B cell (primary cell): ENCODE measurements at regions of chr6 and their contacts with region 1.

Region 1: DNA sequence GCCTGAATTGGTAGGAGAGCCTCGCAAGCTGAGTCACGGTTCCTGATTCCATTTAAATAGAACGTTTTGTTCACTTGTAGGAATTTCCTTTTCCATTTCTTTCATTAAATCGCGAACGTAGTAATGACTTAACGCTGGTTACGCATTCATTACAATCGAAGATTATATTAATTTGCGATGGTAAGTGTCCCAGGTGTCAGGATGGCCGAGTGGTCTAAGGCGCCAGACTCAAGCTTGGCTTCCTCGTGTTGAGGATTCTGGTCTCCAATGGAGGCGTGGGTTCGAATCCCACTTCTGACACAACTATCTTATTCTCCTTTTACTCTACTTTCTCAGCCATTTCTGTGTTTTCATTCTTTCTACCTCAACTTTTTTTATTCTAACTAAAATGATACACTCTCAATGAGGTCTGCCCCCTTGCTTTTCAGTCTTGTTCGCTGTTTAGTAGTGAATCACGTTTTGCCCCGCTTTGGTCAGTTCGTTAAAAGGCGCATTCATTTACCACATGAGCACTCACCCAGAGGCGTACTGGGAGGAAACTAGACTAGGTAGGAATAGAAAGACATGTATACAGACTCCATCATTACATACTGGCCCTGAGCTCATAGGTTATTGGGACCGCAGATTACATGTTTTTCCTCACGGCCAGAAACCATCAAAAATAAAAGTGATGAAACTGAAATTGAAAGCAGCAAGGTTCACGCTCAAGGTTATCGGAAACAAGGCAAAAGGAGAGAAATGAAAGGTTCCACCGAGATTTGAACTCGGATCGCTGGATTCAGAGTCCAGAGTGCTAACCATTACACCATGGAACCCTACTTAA is 17.3 kb upstream of the TRIM27 start:
- DNase-seq: peak; percentile 90
- ATAC-seq: peak; percentile 70
- H3K4me3 ChIP-seq: peak overlapping the region; percentile 55 to 99 (median 83)
- H3K4me3 Mint-ChIP-seq: peak overlapping the region; percentile 95
- H3K27ac ChIP-seq: peak overlapping the region; percentile 46 to 69
- H3K27ac Mint-ChIP-seq: peak overlapping the region; percentile 92
- H3K4me1 ChIP-seq: peaks cover 29 to 39% of the 10 kb centered on the region in 2 donors
- H3K4me1 Mint-ChIP-seq: peaks cover 44% of the 10 kb centered on the region
- H3K27me3 ChIP-seq: peaks cover 0 to 4% (median 0%) of the 10 kb centered on the region in 4 experiments
- H3K27me3 Mint-ChIP-seq: no peaks in the 10 kb centered on the region
- CTCF ChIP-seq: no peak

Region 2: DNA sequence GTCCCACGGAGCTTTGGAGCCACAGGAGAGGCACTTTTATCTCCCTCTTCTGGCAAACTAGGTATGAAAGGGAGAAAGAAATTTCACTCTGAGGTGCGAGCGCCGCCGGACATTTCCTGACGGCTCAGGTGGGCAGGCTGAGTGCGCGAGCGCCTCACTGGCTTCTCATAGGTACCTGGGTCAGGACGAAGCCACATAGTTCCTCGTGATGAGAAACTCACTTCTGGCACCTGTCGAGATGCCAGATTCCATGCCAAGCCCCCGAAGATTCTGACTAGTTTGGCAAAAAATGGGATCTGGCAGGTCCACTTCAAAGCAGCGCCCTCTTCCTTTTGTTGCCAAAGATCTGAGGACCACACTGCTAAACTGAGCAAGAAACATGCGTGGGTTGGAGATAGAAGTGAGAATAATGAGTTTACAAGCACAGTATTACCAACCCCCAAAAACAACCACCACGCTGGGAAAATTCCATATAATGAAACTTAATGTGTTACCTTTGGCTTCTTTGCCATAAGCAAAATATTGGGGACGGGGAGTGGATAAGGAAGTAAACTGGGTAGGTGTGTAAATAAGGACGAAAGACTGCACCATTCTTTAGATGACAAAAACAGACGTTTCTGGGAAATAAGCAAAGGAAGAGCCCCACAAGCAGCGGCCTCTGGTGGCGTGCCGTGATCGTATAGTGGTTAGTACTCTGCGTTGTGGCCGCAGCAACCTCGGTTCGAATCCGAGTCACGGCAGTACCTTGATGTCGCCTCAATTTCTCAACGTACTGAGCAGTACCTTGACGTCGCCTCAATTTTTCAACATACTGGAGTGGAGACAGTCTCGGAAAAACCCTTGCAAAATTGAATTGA is 1783.4 kb before region 1 on chr6:
- CTCF ChIA-PET with region 1: no interaction called
- POLR2A ChIA-PET with region 1: no interaction called
- intact Hi-C with region 1: loop called (anchors 5 kb)
- DNase-seq: peak; percentile 91
- ATAC-seq: peak; percentile 77
- H3K4me3 ChIP-seq: peak overlapping the region; percentile 59 to 91 (median 72)
- H3K4me3 Mint-ChIP-seq: peak overlapping the region; percentile 94
- H3K27ac ChIP-seq: peak overlapping the region; percentile 18 to 45
- H3K27ac Mint-ChIP-seq: peak overlapping the region; percentile 85
- H3K4me1 ChIP-seq: peaks cover 17 to 20% of the 10 kb centered on the region in 2 donors
- H3K4me1 Mint-ChIP-seq: peaks cover 25% of the 10 kb centered on the region
- H3K27me3 ChIP-seq: no peaks in the 10 kb centered on the region
- H3K27me3 Mint-ChIP-seq: no peaks in the 10 kb centered on the region
- CTCF ChIP-seq: peak; percentile 64

Region 3: DNA sequence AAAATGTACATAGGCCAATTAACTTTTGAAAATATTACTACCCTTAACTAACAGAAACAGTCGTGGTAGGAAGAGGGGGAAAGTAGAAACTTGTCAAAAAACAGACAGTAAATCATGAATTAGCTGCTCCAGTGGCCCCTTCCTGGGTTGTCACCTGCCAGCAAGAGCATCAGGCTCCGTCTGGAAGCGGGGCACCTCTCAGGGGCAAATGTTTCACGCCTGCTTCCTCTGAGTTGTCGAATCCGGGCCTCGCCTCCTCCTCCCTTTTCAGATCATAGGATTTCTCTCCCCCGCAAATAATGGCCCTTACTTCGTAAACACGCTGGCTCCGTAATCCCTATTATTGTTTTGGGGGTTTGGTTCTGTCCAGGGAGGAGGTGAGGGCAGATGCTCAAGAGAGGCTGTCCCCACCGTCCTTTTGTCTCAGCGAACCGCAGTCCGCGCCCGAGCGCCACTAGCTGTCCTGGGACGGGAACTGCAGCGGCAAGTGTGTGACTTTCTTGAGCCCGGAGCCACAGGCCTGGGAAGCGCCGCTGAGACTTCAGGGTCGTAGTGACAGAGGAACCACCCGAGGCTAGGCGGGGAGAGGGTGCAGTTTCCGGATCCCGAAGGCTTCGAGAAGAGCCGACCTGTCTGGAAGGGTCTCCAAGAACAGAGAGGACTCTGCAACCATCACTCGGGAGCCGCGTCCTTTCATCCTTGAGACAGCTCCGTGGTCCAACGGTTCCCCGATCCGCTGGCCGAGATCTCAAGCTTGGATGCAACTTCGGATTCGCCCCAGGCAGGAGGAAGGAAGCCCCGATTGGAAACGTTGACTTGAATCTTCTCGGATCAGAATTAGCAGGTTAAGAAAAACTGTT is 1253.7 kb before region 1 on chr6:
- CTCF ChIA-PET with region 1: no interaction called
- POLR2A ChIA-PET with region 1: no interaction called
- intact Hi-C with region 1: loop called (anchors 5 kb)
- DNase-seq: peak; percentile 87
- ATAC-seq: peak; percentile 73
- H3K4me3 ChIP-seq: peak overlapping the region; percentile 27 to 99 (median 77)
- H3K4me3 Mint-ChIP-seq: peak overlapping the region; percentile 93
- H3K27ac ChIP-seq: peak overlapping the region in 1 of 2 donors; percentile 32
- H3K27ac Mint-ChIP-seq: peak overlapping the region; percentile 91
- H3K4me1 ChIP-seq: peaks cover 7 to 15% of the 10 kb centered on the region in 2 donors
- H3K4me1 Mint-ChIP-seq: peaks cover 16% of the 10 kb centered on the region
- H3K27me3 ChIP-seq: peaks cover 0 to 8% (median 2%) of the 10 kb centered on the region in 4 experiments
- H3K27me3 Mint-ChIP-seq: peaks cover 4% of the 10 kb centered on the region
- CTCF ChIP-seq: peak; percentile 69

Region 4: GRCh38 chr6:28895134-28895812 is 45.8 kb before region 1 on chr6:
- CTCF ChIA-PET with region 1: no interaction called
- POLR2A ChIA-PET with region 1: interaction called, 3 read pairs
- intact Hi-C with region 1: loop called (anchors 1 kb)
- DNase-seq: peak; percentile 96
- ATAC-seq: peak; percentile 58
- H3K4me3 ChIP-seq: peak overlapping the region; percentile 73 to 86 (median 83)
- H3K4me3 Mint-ChIP-seq: peak overlapping the region; percentile 99
- H3K27ac ChIP-seq: peak overlapping the region; percentile 97
- H3K27ac Mint-ChIP-seq: peak overlapping the region; percentile 100
- H3K4me1 ChIP-seq: peaks cover 7 to 12% of the 10 kb centered on the region in 2 donors
- H3K4me1 Mint-ChIP-seq: peaks cover 21% of the 10 kb centered on the region
- H3K27me3 ChIP-seq: no peaks in the 10 kb centered on the region
- H3K27me3 Mint-ChIP-seq: peaks cover 4% of the 10 kb centered on the region
- CTCF ChIP-seq: no peak

Region 5: GRCh38 chr6:28953039-28953584 is 12.0 kb after region 1 on chr6:
- CTCF ChIA-PET with region 1: no interaction called
- POLR2A ChIA-PET with region 1: no interaction called
- intact Hi-C with region 1: no loop called
- DNase-seq: peak; percentile 68
- ATAC-seq: peak; percentile 45
- H3K4me3 ChIP-seq: peak overlapping the region in 4 of 5 experiments; percentile 1 to 54 (median 39)
- H3K4me3 Mint-ChIP-seq: peak overlapping the region; percentile 77
- H3K27ac ChIP-seq: no peak overlapping the region
- H3K27ac Mint-ChIP-seq: peak overlapping the region; percentile 20
- H3K4me1 ChIP-seq: peaks cover 10 to 11% of the 10 kb centered on the region in 2 donors
- H3K4me1 Mint-ChIP-seq: peaks cover 15% of the 10 kb centered on the region
- H3K27me3 ChIP-seq: peaks cover 0 to 27% (median 7%) of the 10 kb centered on the region in 4 experiments
- H3K27me3 Mint-ChIP-seq: peaks cover 23% of the 10 kb centered on the region
- CTCF ChIP-seq: no peak

Region 6: DNA sequence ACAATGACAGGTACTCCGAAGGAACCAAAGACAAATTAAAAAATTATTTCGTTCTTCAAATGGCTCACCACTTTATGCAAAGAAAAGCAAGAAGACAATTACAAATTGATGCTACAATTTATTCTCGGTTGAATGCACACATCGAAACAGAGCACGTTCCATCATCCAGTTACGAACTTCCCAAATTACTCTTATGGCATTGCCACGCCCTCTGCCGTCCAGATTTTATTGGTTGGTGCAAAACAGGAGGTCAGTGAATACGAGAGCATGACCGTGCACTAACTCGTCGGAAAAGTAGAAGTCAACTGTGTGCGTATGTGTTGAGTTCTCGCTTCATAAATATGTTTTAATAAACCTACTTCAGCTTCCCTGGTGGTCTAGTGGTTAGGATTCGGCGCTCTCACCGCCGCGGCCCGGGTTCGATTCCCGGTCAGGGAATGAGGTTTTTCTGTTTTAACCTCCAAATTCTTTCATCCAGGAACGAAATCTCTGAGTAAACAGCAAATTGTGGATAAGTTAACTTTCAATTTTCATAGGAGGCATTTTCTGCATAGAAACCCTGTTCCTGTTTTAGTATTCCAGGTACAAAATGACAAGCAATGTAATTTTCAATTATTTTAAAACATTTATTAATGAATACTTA is 40.9 kb after region 1 on chr6:
- CTCF ChIA-PET with region 1: interaction called, 4 read pairs
- POLR2A ChIA-PET with region 1: interaction called, 3 read pairs
- intact Hi-C with region 1: loop called (anchors 1 kb)
- DNase-seq: peak; percentile 91
- ATAC-seq: peak; percentile 70
- H3K4me3 ChIP-seq: peak overlapping the region; percentile 67 to 97 (median 75)
- H3K4me3 Mint-ChIP-seq: peak overlapping the region; percentile 93
- H3K27ac ChIP-seq: no peak overlapping the region
- H3K27ac Mint-ChIP-seq: peak overlapping the region; percentile 96
- H3K4me1 ChIP-seq: peaks cover 36 to 37% of the 10 kb centered on the region in 2 donors
- H3K4me1 Mint-ChIP-seq: peaks cover 55% of the 10 kb centered on the region
- H3K27me3 ChIP-seq: peaks cover 0 to 28% (median 14%) of the 10 kb centered on the region in 4 experiments
- H3K27me3 Mint-ChIP-seq: peaks cover 28% of the 10 kb centered on the region
- CTCF ChIP-seq: no peak